Activated CD4-positive, alpha-beta memory T cell treated with anti-CD3 and anti-CD28 coated beads, Interleukin-2, amount 10 ng/mL, durations not matched to agents 7 days and 5 days (primary cell): ENCODE measurements at regions of chr18 and their contacts with region 1.

Region 1: DNA sequence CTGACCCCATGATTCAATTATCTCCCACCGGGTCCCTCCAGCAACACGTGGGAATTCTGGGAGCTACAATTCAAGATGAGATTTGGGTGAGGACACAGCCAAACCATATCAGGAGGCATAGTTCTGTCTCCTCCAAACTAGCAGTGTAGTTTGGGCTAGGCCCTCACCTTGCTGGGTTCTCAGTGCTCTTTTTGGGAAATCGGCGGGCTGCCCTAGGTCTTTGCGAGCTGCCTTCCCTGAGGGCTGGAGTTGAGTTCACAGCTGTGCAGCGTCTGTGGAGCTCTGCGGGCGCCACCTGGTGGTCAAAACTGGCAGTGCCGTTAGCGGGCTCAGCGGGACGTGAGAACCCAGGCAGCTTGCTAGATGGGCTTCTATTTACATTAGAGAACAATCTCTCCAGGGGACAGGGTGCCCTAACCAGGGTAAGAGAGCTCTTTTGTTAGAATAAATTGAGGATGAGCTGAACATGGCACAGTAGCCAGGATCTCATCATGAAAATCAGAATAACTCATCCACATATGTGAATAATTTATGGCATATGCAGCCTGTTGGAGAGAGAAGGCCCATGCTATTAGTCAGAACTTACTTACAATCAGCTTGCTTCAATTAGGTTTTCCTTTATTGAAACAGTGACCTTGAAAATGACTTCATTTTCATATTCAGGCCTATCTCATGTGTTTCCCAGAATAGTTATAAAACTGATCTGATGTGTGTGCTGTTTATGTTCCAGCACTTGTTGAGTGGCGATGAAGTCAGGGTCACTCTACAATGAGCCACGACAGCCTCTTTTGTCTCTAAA is 27.4 kb upstream of the YES1 start:
- DNase-seq: peak; percentile 87
- H3K4me3 Mint-ChIP-seq: no peak overlapping the region
- H3K27ac Mint-ChIP-seq: no peak overlapping the region
- H3K4me1 Mint-ChIP-seq: peaks cover 7% of the 10 kb centered on the region
- H3K27me3 Mint-ChIP-seq: peaks cover 21% of the 10 kb centered on the region

Region 2: DNA sequence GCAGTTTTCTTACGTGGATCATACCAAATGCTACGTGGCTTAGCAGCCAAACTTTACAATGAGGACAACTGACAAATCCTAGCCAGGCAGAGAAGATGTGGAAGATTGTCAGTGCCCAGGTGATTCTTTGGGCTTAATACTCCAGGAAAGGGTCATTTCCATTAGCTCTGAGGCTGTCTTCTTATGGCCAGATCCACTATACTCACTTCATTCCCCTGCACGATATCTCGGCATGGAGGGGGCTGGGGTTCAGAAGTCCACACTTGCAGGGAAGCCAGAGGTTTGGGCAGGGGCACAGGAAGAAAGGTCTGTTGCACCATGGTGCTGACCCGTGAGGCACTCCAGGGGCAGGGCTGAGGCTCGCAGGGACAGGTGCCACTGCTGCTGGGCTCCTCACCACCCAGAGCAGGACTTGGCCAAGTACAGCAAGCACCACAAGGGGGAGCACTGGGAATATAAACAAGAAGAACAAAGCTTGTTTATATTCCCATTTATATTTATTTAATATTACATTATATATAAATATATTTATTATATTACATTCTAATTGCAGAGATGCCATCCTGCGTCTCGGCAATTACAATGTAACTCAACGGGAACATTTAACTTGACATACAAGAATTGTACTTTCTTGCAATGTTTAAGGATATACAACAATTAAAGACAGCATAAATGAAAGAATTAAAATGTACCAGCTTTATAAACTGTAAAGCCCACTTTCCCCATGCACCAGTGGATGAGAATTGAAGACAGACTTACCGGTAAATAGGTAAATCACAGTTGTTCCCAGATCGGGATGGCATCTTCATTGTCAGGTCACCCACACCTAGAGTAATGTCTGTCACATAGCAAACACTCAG is 215.4 kb before region 1 on chr18:
- CTCF ChIA-PET with region 1: interaction called, 83 read pairs
- POLR2A ChIA-PET with region 1: interaction called, 4 read pairs
- DNase-seq: peak; percentile 69
- H3K4me3 Mint-ChIP-seq: no peak overlapping the region
- H3K27ac Mint-ChIP-seq: no peak overlapping the region
- H3K4me1 Mint-ChIP-seq: no peaks in the 10 kb centered on the region
- H3K27me3 Mint-ChIP-seq: peaks cover 37% of the 10 kb centered on the region

Region 3: GRCh38 chr18:712401-713134 is 126.9 kb before region 1 on chr18 and contains the start of gene ENOSF1:
- CTCF ChIA-PET with region 1: interaction called, 82 read pairs
- POLR2A ChIA-PET with region 1: interaction called, 3 read pairs
- DNase-seq: peak; percentile 90
- H3K4me3 Mint-ChIP-seq: peak within 1 kb of the TSS; percentile 86
- H3K27ac Mint-ChIP-seq: peak within 1 kb of the TSS; percentile 90
- H3K4me1 Mint-ChIP-seq: peaks cover 61% of the 10 kb centered on the region
- H3K27me3 Mint-ChIP-seq: no peaks in the 10 kb centered on the region
- total RNA-seq, gene ENOSF1: 65.3 to 67.1 TPM

Region 4: DNA sequence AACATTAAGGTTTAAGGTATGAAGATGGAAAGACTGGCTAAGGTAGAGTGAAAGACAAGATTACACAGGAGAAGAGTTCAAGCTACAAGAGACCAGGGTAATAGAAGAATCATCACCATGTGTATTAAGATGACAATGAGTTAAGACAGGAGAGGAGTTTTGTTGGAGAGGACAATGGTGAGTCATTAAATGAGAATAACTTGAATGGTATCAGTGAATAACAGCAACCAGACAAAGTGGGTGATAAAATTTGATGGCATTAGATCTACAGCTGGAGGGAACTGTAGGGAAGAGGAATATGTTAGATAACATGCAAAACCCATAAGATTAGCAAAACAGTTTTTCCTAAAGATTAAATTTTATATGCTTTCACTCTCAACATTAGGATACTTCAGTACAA is 108.2 kb before region 1 on chr18:
- CTCF ChIA-PET with region 1: interaction called, 13 read pairs
- POLR2A ChIA-PET with region 1: no interaction called
- DNase-seq: no peak
- H3K4me3 Mint-ChIP-seq: no peak overlapping the region
- H3K27ac Mint-ChIP-seq: no peak overlapping the region
- H3K4me1 Mint-ChIP-seq: peaks cover 7% of the 10 kb centered on the region
- H3K27me3 Mint-ChIP-seq: no peaks in the 10 kb centered on the region

Region 5: GRCh38 chr18:741931-742512 is 97.4 kb before region 1 on chr18:
- CTCF ChIA-PET with region 1: interaction called, 173 read pairs
- POLR2A ChIA-PET with region 1: no interaction called
- DNase-seq: no peak
- H3K4me3 Mint-ChIP-seq: no peak overlapping the region
- H3K27ac Mint-ChIP-seq: no peak overlapping the region
- H3K4me1 Mint-ChIP-seq: peaks cover 6% of the 10 kb centered on the region
- H3K27me3 Mint-ChIP-seq: no peaks in the 10 kb centered on the region

Region 6: GRCh38 chr18:812376-813171 is 26.8 kb before region 1 on chr18:
- CTCF ChIA-PET with region 1: interaction called, 10 read pairs
- POLR2A ChIA-PET with region 1: interaction called, 5 read pairs
- DNase-seq: peak; percentile 83
- H3K4me3 Mint-ChIP-seq: peak overlapping the region; percentile 83
- H3K27ac Mint-ChIP-seq: peak overlapping the region; percentile 99
- H3K4me1 Mint-ChIP-seq: peaks cover 72% of the 10 kb centered on the region
- H3K27me3 Mint-ChIP-seq: peaks cover 3% of the 10 kb centered on the region

Region 7: DNA sequence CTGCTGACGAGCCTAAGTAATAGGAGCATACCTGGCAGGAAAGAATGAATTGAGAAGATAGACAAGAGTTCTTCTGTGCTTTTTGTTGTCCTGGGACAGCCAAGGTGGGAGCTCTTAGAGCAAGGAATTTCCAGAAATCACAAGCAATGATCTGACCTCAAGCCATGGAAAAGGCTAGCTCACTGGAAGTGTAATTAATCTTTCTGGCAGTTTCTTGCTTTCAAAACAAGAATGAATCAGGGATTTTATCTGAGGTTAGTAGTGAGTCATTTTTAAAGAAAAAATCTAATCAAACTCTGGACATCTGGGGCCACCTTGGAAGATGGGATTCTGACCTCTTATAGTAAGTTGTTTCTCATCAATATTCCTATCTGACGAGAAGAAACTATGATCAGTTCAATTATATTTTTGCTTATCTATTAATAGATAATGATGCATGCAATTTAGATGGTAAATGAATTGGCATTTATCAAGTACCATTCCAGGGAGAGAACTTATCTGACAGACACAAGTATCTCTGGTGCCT is 163.3 kb after region 1 on chr18:
- CTCF ChIA-PET with region 1: no interaction called
- POLR2A ChIA-PET with region 1: no interaction called
- DNase-seq: no peak
- H3K4me3 Mint-ChIP-seq: no peak overlapping the region
- H3K27ac Mint-ChIP-seq: no peak overlapping the region
- H3K4me1 Mint-ChIP-seq: no peaks in the 10 kb centered on the region
- H3K27me3 Mint-ChIP-seq: no peaks in the 10 kb centered on the region